CD8-positive, alpha-beta memory T cell (primary cell): ENCODE measurements at regions of chr1 and their contacts with region 1.

Region 1: DNA sequence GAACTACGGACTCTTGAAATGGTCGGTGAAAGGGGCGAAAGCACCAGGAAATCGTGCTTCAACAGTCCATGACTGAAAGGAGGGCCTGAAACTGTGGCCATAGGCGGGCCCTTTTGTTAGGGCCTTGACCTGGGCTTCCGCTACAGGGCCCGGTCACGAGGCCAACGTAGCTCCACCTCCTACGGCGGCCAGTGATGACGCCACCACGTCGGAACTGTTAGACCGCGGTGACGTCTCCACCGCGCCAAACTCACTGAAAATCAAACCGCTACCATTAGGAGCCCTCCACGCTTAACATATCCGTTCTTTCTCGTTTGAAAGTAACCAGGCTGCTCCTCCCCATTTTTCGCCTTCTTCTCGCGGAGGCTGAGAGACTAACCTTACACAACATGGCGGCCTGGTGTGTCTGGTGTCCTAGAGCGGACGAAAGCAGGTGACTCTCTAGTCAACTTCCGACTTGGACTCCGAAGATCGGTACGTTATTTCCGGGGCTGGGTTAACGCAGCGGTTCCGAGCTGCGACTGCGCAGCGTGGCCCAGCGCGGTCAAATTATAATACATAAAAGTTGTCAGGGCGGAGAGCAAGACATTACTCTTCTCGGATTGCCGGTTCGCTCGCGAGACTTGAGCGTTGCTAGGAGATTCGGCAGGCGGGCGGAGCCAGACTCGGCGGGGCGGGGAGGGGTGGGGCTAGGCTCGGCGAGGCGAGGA is 376 bp upstream of the CACYBP start:
- DNase-seq: peak; percentile 97 to 99 (median 98)
- H3K4me3 ChIP-seq: peak overlapping the region; percentile 85
- H3K4me3 Mint-ChIP-seq: no peak overlapping the region
- H3K27ac ChIP-seq: peak overlapping the region; percentile 100
- H3K27ac Mint-ChIP-seq: no peak overlapping the region
- H3K4me1 ChIP-seq: peaks cover 32% of the 10 kb centered on the region
- H3K4me1 Mint-ChIP-seq: peaks cover 37 to 40% (median 38%) of the 10 kb centered on the region in 3 donors
- H3K27me3 ChIP-seq: no peaks in the 10 kb centered on the region
- H3K27me3 Mint-ChIP-seq: no peaks in the 10 kb centered on the region

Region 2: GRCh38 chr1:174800216-174800851 is 199.0 kb before region 1 on chr1:
- CTCF ChIA-PET with region 1: interaction called, 9 read pairs
- POLR2A ChIA-PET with region 1: interaction called, 28 read pairs
- DNase-seq: peak in 1 of 5 donors; percentile 46
- H3K4me3 ChIP-seq: peak overlapping the region; percentile 89
- H3K4me3 Mint-ChIP-seq: no peak overlapping the region
- H3K27ac ChIP-seq: peak overlapping the region; percentile 82
- H3K27ac Mint-ChIP-seq: no peak overlapping the region
- H3K4me1 ChIP-seq: peaks cover 17% of the 10 kb centered on the region
- H3K4me1 Mint-ChIP-seq: peaks cover 16 to 24% (median 22%) of the 10 kb centered on the region in 3 donors
- H3K27me3 ChIP-seq: no peaks in the 10 kb centered on the region
- H3K27me3 Mint-ChIP-seq: no peaks in the 10 kb centered on the region

Region 3: DNA sequence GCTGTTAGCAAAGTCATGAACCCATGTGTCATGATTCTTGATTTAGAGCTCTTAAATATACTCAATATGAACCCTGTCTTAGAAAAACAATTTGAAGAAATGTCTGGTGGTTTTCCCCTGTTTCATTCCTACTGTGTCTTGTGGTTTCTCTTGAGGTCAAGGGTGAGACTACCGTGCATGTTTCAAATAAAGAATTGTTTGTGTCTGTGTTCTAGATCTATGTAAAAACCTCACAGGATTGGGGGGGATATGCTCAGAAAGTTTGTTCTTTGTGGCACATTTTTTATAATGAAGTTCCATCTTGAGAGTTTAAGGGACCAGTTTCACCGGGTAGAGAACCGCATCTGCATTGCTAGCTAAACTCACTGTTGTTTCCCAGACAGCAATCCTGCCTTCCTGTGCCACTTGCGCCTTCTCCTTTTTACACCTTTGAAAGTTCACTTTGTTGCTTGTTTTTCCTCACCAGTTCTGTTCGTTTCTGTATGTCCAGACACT is 30.6 kb before region 1 on chr1:
- CTCF ChIA-PET with region 1: interaction called, 12 read pairs
- POLR2A ChIA-PET with region 1: interaction called, 123 read pairs
- DNase-seq: peak in 3 of 5 donors; percentile 56 to 89 (median 79)
- H3K4me3 ChIP-seq: peak overlapping the region; percentile 29
- H3K4me3 Mint-ChIP-seq: peak overlapping the region; percentile 67 to 90 (median 82)
- H3K27ac ChIP-seq: peak overlapping the region; percentile 55
- H3K27ac Mint-ChIP-seq: peak overlapping the region; percentile 82 to 99 (median 92)
- H3K4me1 ChIP-seq: peaks cover 80% of the 10 kb centered on the region
- H3K4me1 Mint-ChIP-seq: peaks cover 77 to 85% (median 84%) of the 10 kb centered on the region in 3 donors
- H3K27me3 ChIP-seq: no peaks in the 10 kb centered on the region
- H3K27me3 Mint-ChIP-seq: no peaks in the 10 kb centered on the region

Region 4: GRCh38 chr1:174982971-174983689 is 16.2 kb before region 1 on chr1:
- CTCF ChIA-PET with region 1: interaction called, 10 read pairs
- POLR2A ChIA-PET with region 1: interaction called, 11 read pairs
- DNase-seq: peak in 4 of 5 donors; percentile 29 to 62 (median 50)
- H3K4me3 ChIP-seq: no peak overlapping the region
- H3K4me3 Mint-ChIP-seq: no peak overlapping the region
- H3K27ac ChIP-seq: no peak overlapping the region
- H3K27ac Mint-ChIP-seq: peak overlapping the region in 4 of 8 donors; percentile 38 to 76 (median 71)
- H3K4me1 ChIP-seq: peaks cover 6% of the 10 kb centered on the region
- H3K4me1 Mint-ChIP-seq: peaks cover 13 to 54% (median 45%) of the 10 kb centered on the region in 3 donors
- H3K27me3 ChIP-seq: no peaks in the 10 kb centered on the region
- H3K27me3 Mint-ChIP-seq: peaks cover 0 to 1% of the 10 kb centered on the region in 2 donors

Region 5: DNA sequence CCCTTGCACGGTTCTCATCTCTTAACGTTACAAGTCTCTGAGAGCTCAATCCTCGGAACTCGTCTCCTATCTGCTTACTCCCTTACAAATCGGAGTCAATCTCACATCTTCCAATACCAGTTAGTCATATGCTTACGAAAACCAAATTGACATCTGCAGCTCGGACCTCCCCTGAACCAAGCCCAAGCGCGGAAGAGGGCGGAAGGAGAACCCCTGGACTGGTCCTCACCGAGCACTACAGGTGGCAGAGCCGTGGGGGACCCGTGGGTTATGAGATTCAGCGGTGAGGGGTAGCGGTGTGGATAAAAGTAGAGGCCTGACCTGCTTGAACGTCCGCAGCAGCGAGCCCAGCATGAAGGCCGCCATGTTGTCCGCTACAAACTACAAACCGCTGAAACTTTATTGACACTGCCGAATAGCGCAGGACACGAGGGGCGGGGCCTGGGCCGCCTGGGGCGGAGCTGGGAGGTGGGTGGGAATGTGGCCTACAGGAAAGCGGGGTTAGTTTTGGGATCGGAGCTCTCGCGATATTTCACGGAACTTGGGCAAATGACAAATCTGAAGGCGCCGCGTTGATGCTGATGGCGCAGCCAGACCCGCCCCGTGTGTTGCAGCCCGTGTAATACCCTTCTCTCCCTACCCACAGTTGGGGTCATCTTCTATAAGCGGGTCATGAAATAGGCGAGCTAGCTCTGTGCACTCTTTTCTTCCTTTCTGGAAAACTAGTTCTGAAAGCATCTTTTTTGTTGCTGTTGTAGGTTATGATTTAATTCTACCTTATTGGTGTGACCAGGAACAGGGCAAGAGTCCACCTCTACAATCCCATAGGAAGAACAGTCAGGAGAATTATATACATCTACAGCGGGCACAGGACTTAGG is 23.9 kb after region 1 on chr1 and contains the start of gene MRPS14:
- CTCF ChIA-PET with region 1: interaction called, 34 read pairs
- POLR2A ChIA-PET with region 1: interaction called, 107 read pairs
- DNase-seq: peak; percentile 96 to 98 (median 98)
- H3K4me3 ChIP-seq: peak within 1 kb of the TSS; percentile 94
- H3K4me3 Mint-ChIP-seq: peak within 1 kb of the TSS; percentile 87 to 95 (median 90)
- H3K27ac ChIP-seq: peak within 1 kb of the TSS; percentile 88
- H3K27ac Mint-ChIP-seq: peak within 1 kb of the TSS; percentile 87 to 99 (median 94)
- H3K4me1 ChIP-seq: peaks cover 13% of the 10 kb centered on the region
- H3K4me1 Mint-ChIP-seq: peaks cover 31 to 42% (median 39%) of the 10 kb centered on the region in 3 donors
- H3K27me3 ChIP-seq: no peaks in the 10 kb centered on the region
- H3K27me3 Mint-ChIP-seq: no peaks in the 10 kb centered on the region
- total RNA-seq, gene MRPS14: 41.0 to 41.4 TPM

Region 6: DNA sequence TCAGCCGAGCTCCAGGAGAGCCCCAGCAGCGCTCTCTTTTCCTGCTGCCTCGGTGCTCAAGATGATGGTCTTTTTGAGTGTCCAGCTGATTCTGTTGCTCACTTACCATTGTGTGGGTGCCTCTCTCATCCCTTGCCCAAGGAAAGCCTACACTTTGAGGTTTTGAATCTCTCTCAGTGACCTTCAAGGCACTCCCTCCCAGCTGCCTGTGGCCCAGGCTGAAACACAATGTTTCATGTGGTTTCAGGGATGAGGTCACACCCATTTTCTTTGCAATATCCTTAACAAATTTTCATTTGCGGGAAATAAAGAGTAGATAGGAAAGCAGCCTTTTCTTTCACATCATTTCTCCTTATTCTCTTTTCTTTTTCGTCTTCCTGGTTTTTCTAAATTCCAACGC is 36.5 kb after region 1 on chr1:
- CTCF ChIA-PET with region 1: no interaction called
- POLR2A ChIA-PET with region 1: no interaction called
- DNase-seq: no peak
- H3K4me3 ChIP-seq: no peak overlapping the region
- H3K4me3 Mint-ChIP-seq: no peak overlapping the region
- H3K27ac ChIP-seq: no peak overlapping the region
- H3K27ac Mint-ChIP-seq: no peak overlapping the region
- H3K4me1 ChIP-seq: no peaks in the 10 kb centered on the region
- H3K4me1 Mint-ChIP-seq: no peaks in the 10 kb centered on the region
- H3K27me3 ChIP-seq: no peaks in the 10 kb centered on the region
- H3K27me3 Mint-ChIP-seq: peaks cover 8 to 11% of the 10 kb centered on the region in 2 donors